Mammary epithelial cell (primary cell): ENCODE measurements at regions of chr19 and their contacts with region 1.

Region 1: GRCh38 chr19:17854061-17854460 is 5.6 kb upstream of the RPL18A start:
- DNase-seq: no peak
- H3K4me3 ChIP-seq: no peak overlapping the region
- H3K27ac ChIP-seq: no peak overlapping the region
- H3K4me1 ChIP-seq: peaks cover 9% of the 10 kb centered on the region
- H3K27me3 ChIP-seq: no peaks in the 10 kb centered on the region
- CTCF ChIP-seq: no peak

Region 2: DNA sequence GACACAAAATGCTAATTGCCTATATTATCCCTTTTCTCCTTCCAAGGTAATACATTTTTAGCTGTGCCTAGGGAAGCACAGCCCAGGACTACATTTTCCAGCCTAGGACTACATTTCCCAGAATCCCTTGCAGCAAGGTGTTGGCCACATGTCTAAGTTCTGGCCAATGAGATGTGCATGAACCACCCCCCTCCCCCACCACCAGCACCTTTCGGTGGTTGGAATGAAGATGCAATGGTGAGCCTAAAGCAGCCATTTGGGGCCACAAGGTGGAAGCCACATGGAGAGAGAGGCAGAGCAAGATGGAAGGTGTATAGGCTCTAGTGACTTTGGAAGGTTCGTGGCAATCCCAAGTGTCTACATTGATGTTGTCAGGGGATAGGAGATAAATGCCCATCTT is 182.2 kb before region 1 on chr19:
- CTCF ChIA-PET with region 1: no interaction called
- dilution Hi-C with region 1: loop called (anchors 5 kb)
- in situ Hi-C with region 1: no loop called
- intact Hi-C with region 1: no loop called
- DNase-seq: peak; percentile 42
- H3K4me3 ChIP-seq: no peak overlapping the region
- H3K27ac ChIP-seq: no peak overlapping the region
- H3K4me1 ChIP-seq: no peaks in the 10 kb centered on the region
- H3K27me3 ChIP-seq: no peaks in the 10 kb centered on the region
- CTCF ChIP-seq: no peak

Region 3: DNA sequence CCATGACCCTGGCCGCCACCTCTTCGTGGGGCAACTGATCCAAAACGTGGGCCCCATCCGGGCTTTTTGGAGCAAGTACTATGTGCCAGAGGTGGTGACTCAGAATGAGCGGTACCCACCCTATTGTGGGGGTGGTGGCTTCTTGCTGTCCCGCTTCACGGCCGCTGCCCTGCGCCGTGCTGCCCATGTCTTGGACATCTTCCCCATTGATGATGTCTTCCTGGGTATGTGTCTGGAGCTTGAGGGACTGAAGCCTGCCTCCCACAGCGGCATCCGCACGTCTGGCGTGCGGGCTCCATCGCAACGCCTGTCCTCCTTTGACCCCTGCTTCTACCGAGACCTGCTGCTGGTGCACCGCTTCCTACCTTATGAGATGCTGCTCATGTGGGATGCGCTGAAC is 42.4 kb before region 1 on chr19:
- CTCF ChIA-PET with region 1: no interaction called
- dilution Hi-C with region 1: loop called (anchors 5 kb)
- in situ Hi-C with region 1: no loop called
- intact Hi-C with region 1: no loop called
- DNase-seq: no peak
- H3K4me3 ChIP-seq: no peak overlapping the region
- H3K27ac ChIP-seq: no peak overlapping the region
- H3K4me1 ChIP-seq: no peaks in the 10 kb centered on the region
- H3K27me3 ChIP-seq: no peaks in the 10 kb centered on the region
- CTCF ChIP-seq: no peak